ENCODE measurements at regions of chr1 and their contacts with region 1.

Region 1: GRCh38 chr1:61049850-61050540 is 32.4 kb upstream of the NFIA start:
- DNase-seq: peak; percentile 92
- ATAC-seq: peak; percentile 81
- H3K4me3 Mint-ChIP-seq: peak overlapping the region; percentile 53
- H3K27ac Mint-ChIP-seq: no peak overlapping the region
- H3K4me1 Mint-ChIP-seq: peaks cover 32% of the 10 kb centered on the region
- H3K27me3 Mint-ChIP-seq: peaks cover 41% of the 10 kb centered on the region

Region 2: DNA sequence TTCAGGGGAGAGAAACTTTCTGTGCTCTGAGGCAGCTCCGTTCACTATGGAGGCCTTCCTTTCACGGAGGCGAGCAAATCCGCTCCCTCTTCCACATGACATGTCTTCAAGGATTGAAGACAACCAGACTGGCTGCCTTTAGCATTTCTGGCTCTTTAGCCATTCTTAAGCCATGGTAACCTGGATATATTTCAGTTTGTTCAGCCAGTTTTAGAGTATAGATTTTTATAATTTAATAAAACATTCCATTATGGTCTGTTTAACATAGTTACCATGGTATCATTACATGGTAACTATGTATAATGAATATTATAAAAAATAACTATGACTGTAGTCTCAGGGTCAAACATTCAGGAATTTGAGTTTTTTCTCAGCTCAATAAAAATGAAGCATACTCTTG is 21.9 kb before region 1 on chr1:
- CTCF ChIA-PET with region 1: no interaction called
- DNase-seq: no peak
- ATAC-seq: no peak
- H3K4me3 Mint-ChIP-seq: no peak overlapping the region
- H3K27ac Mint-ChIP-seq: no peak overlapping the region
- H3K4me1 Mint-ChIP-seq: no peaks in the 10 kb centered on the region
- H3K27me3 Mint-ChIP-seq: no peaks in the 10 kb centered on the region

Region 3: GRCh38 chr1:61064673-61065072 is 14.7 kb after region 1 on chr1:
- CTCF ChIA-PET with region 1: interaction called, 11 read pairs
- DNase-seq: no peak
- ATAC-seq: no peak
- H3K4me3 Mint-ChIP-seq: no peak overlapping the region
- H3K27ac Mint-ChIP-seq: no peak overlapping the region
- H3K4me1 Mint-ChIP-seq: peaks cover 2% of the 10 kb centered on the region
- H3K27me3 Mint-ChIP-seq: no peaks in the 10 kb centered on the region

Region 4: GRCh38 chr1:61083807-61084440 is 33.9 kb after region 1 on chr1:
- CTCF ChIA-PET with region 1: interaction called, 43 read pairs
- DNase-seq: no peak
- ATAC-seq: no peak
- H3K4me3 Mint-ChIP-seq: peak overlapping the region; percentile 80
- H3K27ac Mint-ChIP-seq: peak overlapping the region; percentile 33
- H3K4me1 Mint-ChIP-seq: peaks cover 35% of the 10 kb centered on the region
- H3K27me3 Mint-ChIP-seq: peaks cover 31% of the 10 kb centered on the region

Region 5: DNA sequence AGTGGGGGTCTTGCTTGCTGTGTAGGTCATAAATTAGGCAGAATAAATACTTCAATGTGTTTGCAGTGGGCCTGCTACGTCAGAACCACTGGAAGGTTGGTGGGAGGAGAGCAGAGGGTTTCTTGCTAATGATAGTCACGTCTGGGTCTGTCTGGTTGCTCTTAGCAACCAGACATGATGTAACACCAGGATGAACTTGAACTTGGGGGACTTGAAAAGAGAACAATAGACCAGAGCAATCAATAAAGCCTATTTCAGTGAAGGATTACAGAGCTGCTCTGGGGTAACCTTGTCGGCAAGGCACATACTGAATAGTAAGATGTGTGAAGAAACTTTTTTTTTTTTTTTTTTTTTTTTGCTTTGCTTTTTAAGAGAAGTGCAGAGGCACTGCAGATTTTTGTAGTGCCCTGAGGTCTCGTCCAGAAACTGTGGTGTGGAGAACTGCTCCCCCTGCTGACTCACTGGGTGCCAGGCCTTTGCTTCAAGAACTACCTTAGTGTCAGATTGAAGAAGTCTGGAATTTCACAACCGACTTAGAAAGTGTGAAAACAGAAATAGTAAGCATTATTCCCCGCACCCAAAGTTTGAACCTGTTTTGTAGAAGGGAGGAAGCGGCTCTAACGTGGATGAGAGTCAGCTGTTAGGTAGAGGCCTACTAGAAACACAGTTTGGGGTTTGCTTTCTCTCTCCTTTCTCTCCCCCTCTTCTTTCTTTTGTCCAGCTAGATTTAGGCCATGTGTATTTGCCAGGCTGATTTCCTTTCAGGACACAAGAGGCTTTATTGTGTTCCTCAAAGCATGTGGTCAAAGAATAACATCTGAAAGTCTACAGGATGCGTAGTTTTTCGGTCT is 403.3 kb after region 1 on chr1:
- CTCF ChIA-PET with region 1: interaction called, 22 read pairs
- DNase-seq: peak; percentile 81
- ATAC-seq: peak; percentile 93
- H3K4me3 Mint-ChIP-seq: peak overlapping the region; percentile 13
- H3K27ac Mint-ChIP-seq: no peak overlapping the region
- H3K4me1 Mint-ChIP-seq: peaks cover 11% of the 10 kb centered on the region
- H3K27me3 Mint-ChIP-seq: no peaks in the 10 kb centered on the region

Measured in activated CD8-positive, alpha-beta memory T cell treated with anti-CD3 and anti-CD28 coated beads, Interleukin-2, amount 10 ng/mL, durations not matched to agents 7 days and 5 days (primary cell).